ENCODE measurements at regions of chr7 and their contacts with region 1.

Region 1: DNA sequence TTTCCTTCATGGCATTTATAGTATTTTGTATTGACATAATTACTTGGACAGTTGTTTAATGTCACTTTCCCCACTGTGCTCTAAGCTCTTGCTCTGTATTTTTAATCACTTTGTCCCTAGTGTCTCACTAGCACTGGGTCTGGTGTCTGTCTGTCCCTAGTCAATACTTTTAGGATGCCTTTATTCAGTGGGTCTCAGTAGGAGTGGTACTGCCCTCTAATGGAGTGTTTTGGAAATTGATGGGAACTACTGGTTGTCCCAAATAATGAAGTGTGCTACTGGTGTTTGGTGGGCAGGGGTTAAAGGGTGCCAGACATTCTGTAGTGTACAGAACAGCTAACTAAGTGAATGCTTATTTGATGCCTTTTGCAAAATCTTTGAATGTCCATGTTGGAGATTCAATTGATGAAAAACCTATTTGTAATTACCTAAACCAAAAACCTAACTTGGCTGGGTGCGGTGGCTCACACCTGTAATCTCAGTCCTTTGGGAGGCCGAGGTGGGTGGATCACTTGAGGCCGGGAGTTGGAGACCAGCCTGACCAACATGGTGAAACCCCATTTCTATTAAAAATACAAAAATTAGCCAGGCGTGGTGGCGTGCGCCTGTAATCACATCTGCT is 33.3 kb downstream of the CDK14 start:
- DNase-seq: peak; percentile 77
- H3K4me3 Mint-ChIP-seq: no peak overlapping the region
- H3K27ac Mint-ChIP-seq: no peak overlapping the region
- H3K4me1 Mint-ChIP-seq: peaks cover 21% of the 10 kb centered on the region
- H3K27me3 Mint-ChIP-seq: no peaks in the 10 kb centered on the region
- CTCF ChIP-seq: peak; percentile 51

Region 2: DNA sequence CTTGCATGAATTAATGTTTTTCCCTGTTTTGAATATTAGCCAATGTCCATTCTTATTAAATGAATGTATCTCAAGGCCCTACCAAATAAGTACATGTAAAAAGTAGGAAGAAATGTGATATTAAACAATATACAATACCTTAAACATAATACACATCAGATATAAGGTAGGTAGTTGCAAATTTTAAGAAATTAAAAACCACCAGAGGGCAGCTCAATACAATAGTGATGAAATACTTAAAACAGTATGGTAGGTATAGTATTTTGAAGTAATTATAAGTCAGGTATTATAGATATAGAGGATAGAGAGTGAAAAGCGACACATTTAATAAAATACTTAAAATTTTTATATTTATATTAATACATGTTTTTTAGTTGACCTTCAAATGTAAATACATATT is 76.9 kb before region 1 on chr7:
- CTCF ChIA-PET with region 1: interaction called, 86 read pairs
- POLR2A ChIA-PET with region 1: interaction called, 6 read pairs
- intact Hi-C with region 1: loop called (anchors 1 kb)
- DNase-seq: peak; percentile 34
- H3K4me3 Mint-ChIP-seq: no peak overlapping the region
- H3K27ac Mint-ChIP-seq: no peak overlapping the region
- H3K4me1 Mint-ChIP-seq: no peaks in the 10 kb centered on the region
- H3K27me3 Mint-ChIP-seq: no peaks in the 10 kb centered on the region
- CTCF ChIP-seq: peak; percentile 30

Region 3: DNA sequence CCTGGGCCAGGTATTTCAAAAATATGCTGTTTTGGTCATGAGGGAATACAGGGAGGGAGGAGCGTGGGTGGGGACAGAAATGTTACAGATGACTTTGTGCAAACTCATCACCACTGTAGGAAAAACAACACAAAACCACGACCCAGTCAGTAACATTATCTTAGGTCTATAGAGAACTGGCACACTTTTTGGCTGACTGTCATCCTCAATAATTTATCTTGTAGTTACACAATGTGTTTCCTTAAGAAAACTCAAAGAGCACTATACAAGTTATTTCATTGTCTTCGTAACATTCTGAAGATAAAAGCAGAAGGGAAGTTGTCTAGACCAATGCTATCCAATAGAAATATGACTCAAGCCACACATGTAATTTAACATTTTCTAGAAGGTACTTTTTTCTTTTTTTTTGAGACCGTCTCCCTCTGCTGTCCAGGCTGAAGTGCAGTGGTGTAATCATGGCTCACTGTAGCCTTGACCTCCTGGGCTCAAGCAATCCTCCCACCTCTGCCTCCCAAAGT is 50.2 kb before region 1 on chr7:
- CTCF ChIA-PET with region 1: interaction called, 17 read pairs
- POLR2A ChIA-PET with region 1: interaction called, 7 read pairs
- intact Hi-C with region 1: no loop called
- DNase-seq: peak; percentile 78
- H3K4me3 Mint-ChIP-seq: no peak overlapping the region
- H3K27ac Mint-ChIP-seq: peak overlapping the region; percentile 14
- H3K4me1 Mint-ChIP-seq: peaks cover 9% of the 10 kb centered on the region
- H3K27me3 Mint-ChIP-seq: no peaks in the 10 kb centered on the region
- CTCF ChIP-seq: no peak

Region 4: DNA sequence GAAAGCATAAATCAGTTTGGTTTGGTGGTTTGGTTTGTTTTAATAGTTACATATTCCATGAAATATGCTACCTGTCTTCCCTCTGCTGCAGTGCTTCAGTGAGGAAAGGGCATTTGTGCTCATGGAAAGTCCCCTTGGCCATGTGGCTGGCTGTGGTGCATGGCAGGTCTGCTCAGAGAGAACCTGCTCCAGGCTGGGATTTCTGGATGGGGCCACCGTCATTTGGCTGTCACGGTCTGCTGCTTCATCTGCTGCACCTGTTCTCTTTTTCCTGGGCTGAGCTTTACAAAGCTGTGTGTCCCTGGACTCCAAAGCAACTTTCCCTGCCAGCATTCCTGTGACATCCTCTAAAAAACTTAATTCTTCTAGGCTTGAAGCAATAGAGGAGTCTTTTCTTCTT is 24.4 kb before region 1 on chr7:
- CTCF ChIA-PET with region 1: interaction called, 118 read pairs
- POLR2A ChIA-PET with region 1: interaction called, 120 read pairs
- intact Hi-C with region 1: no loop called
- DNase-seq: no peak
- H3K4me3 Mint-ChIP-seq: no peak overlapping the region
- H3K27ac Mint-ChIP-seq: no peak overlapping the region
- H3K4me1 Mint-ChIP-seq: peaks cover 41% of the 10 kb centered on the region
- H3K27me3 Mint-ChIP-seq: no peaks in the 10 kb centered on the region
- CTCF ChIP-seq: no peak

Measured in MCF 10A (cell line).